ENCODE measurements at regions of chr2 and their contacts with region 1.

Region 1: GRCh38 chr2:76544901-76545300 is 834.2 kb upstream of the GCFC2 start:
- DNase-seq: no peak
- ATAC-seq: no peak
- H3K4me3 ChIP-seq: no peak overlapping the region
- H3K27ac ChIP-seq: no peak overlapping the region
- H3K4me1 ChIP-seq: no peaks in the 10 kb centered on the region
- H3K27me3 ChIP-seq: no peaks in the 10 kb centered on the region
- CTCF ChIP-seq: no peak
- POLR2A ChIP-seq: no peak
- RAD21 ChIP-seq: no peak

Region 2: GRCh38 chr2:76008001-76008702 is 536.7 kb before region 1 on chr2:
- CTCF ChIA-PET with region 1: no interaction called
- POLR2A ChIA-PET with region 1: interaction called, 10 read pairs
- dilution Hi-C with region 1: no loop called
- in situ Hi-C with region 1: no loop called
- intact Hi-C with region 1: no loop called
- DNase-seq: no peak
- ATAC-seq: no peak
- H3K4me3 ChIP-seq: no peak overlapping the region
- H3K27ac ChIP-seq: no peak overlapping the region
- H3K4me1 ChIP-seq: no peaks in the 10 kb centered on the region
- H3K27me3 ChIP-seq: no peaks in the 10 kb centered on the region
- CTCF ChIP-seq: no peak
- POLR2A ChIP-seq: no peak
- RAD21 ChIP-seq: no peak